Common myeloid progenitor, CD34-positive (primary cell): ENCODE measurements at regions of chr11 and their contacts with region 1.

Region 1: GRCh38 chr11:128905345-128906184 is 14.4 kb downstream of the KCNJ5 start:
- DNase-seq: peak; percentile 50 to 78 (median 59)
- H3K4me3 ChIP-seq: peak overlapping the region in 6 of 7 experiments; percentile 51 to 77 (median 61)
- H3K27ac ChIP-seq: no peak overlapping the region
- H3K4me1 ChIP-seq: peaks cover 12 to 63% (median 48%) of the 10 kb centered on the region in 4 experiments
- H3K27me3 ChIP-seq: peaks cover 0 to 9% (median 2%) of the 10 kb centered on the region in 5 experiments

Region 2: GRCh38 chr11:128733440-128734102 is 172.0 kb before region 1 on chr11:
- CTCF ChIA-PET with region 1: no interaction called
- POLR2A ChIA-PET with region 1: no interaction called
- DNase-seq: no peak
- H3K4me3 ChIP-seq: peak overlapping the region in 4 of 7 experiments; percentile 0 to 30 (median 16)
- H3K27ac ChIP-seq: no peak overlapping the region
- H3K4me1 ChIP-seq: peaks cover 68 to 98% (median 85%) of the 10 kb centered on the region in 4 experiments
- H3K27me3 ChIP-seq: no peaks in the 10 kb centered on the region

Region 3: DNA sequence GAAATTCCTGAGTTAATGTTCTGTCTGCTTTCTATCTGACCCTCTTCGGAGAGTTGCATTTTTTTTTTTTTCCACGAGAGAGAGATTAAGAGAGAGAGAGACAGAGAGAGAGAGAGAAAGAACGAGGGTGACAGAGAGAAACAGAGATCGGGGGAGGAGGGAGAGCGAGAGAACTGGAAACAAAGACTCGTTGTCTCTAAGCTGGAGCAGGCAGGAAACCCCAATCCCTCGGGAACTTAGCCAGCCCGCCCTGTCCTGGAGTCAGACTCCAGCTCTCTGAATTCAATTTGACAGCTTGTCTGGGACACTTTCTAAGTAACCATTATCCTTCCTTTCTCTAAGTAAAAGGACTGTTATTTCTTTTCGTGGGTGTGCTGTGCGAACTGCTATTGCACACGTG is 115.4 kb before region 1 on chr11:
- CTCF ChIA-PET with region 1: no interaction called
- POLR2A ChIA-PET with region 1: no interaction called
- DNase-seq: no peak
- H3K4me3 ChIP-seq: no peak overlapping the region
- H3K27ac ChIP-seq: no peak overlapping the region
- H3K4me1 ChIP-seq: no peaks in the 10 kb centered on the region
- H3K27me3 ChIP-seq: no peaks in the 10 kb centered on the region

Region 4: DNA sequence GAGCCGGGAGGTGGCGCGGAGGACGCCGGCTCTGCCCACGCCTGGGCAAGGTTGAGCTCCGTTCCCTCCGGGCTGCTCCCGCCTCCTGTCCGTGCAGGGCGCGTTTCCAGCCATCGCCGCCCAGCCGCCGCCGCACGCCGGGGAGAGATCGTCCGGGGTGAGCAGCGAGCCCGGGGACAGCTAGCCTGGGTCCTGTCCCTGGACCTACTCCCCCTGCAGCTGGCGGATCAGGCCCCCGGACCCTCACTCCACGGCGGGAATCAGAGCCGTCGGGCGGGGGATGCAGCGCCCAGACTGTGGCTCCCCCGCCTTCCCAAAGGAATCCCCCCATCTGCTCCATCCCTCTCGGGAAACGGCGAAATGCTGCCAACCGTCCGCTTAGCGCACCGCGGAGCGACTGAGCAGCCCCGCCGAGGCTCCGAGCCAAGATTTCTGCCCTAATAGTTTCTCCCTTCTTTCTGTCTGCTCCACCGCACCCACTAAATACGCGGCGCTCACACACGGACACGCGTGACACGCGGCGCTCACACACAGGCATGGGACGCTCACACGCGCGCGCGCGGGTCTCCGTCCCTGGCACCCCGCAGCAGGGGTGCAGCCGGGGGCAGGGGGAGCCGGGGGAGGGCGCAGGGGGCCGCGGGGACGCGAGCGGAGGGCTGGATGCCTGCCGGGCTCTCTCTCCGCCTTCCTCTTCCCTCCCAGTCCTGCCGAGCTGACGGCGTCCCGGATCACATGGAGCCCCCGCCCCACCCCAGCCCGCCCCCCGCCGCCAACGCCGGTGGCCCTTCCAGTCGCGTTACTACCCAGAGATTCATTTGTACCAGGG is 14.8 kb before region 1 on chr11 and contains the start of gene KCNJ5:
- CTCF ChIA-PET with region 1: interaction called, 153 read pairs
- POLR2A ChIA-PET with region 1: no interaction called
- DNase-seq: peak in 2 of 3 donors; percentile 51 to 68
- H3K4me3 ChIP-seq: peak within 1 kb of the TSS in 6 of 7 experiments; percentile 15 to 69 (median 53)
- H3K27ac ChIP-seq: no peak within 1 kb of the TSS
- H3K4me1 ChIP-seq: peaks cover 0 to 37% (median 21%) of the 10 kb centered on the region in 4 experiments
- H3K27me3 ChIP-seq: peaks cover 3 to 71% (median 45%) of the 10 kb centered on the region in 5 experiments

Region 5: GRCh38 chr11:128928400-128928799 is 22.8 kb after region 1 on chr11:
- CTCF ChIA-PET with region 1: interaction called, 19 read pairs
- POLR2A ChIA-PET with region 1: no interaction called
- DNase-seq: peak in 2 of 3 donors; percentile 48 to 51
- H3K4me3 ChIP-seq: peak overlapping the region in 1 of 7 experiments; percentile 11
- H3K27ac ChIP-seq: no peak overlapping the region
- H3K4me1 ChIP-seq: peaks cover 0 to 6% (median 0%) of the 10 kb centered on the region in 4 experiments
- H3K27me3 ChIP-seq: peaks cover 0 to 9% (median 0%) of the 10 kb centered on the region in 5 experiments

Region 6: GRCh38 chr11:128948589-128948988 is 43.0 kb after region 1 on chr11:
- CTCF ChIA-PET with region 1: interaction called, 63 read pairs
- POLR2A ChIA-PET with region 1: no interaction called
- DNase-seq: peak; percentile 48 to 62 (median 55)
- H3K4me3 ChIP-seq: no peak overlapping the region
- H3K27ac ChIP-seq: no peak overlapping the region
- H3K4me1 ChIP-seq: no peaks in the 10 kb centered on the region
- H3K27me3 ChIP-seq: peaks cover 0 to 4% (median 0%) of the 10 kb centered on the region in 5 experiments

Region 7: GRCh38 chr11:129066229-129066628 is 160.7 kb after region 1 on chr11:
- CTCF ChIA-PET with region 1: no interaction called
- POLR2A ChIA-PET with region 1: no interaction called
- DNase-seq: no peak
- H3K4me3 ChIP-seq: no peak overlapping the region
- H3K27ac ChIP-seq: no peak overlapping the region
- H3K4me1 ChIP-seq: no peaks in the 10 kb centered on the region
- H3K27me3 ChIP-seq: no peaks in the 10 kb centered on the region

Region 8: DNA sequence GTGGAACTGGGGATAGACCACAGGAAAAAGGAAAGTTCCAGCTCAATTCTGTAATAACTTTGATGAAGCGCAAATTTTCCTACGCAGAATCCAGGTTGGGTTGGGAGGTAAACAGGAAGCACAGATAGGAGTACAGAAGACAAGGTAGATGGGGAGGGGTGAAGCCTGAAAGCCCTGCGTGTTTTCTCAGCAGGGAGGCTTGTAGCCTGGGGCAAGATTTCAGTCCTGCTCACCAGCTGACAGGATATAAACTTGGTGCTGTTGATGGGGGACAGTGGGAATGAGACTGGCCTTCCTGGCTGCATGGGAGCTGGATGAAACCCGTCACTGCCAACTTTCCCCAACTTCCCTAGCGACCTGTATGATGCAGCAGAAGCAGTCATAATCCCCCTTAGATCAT is 171.6 kb after region 1 on chr11:
- CTCF ChIA-PET with region 1: no interaction called
- POLR2A ChIA-PET with region 1: no interaction called
- DNase-seq: no peak
- H3K4me3 ChIP-seq: no peak overlapping the region
- H3K27ac ChIP-seq: no peak overlapping the region
- H3K4me1 ChIP-seq: no peaks in the 10 kb centered on the region
- H3K27me3 ChIP-seq: no peaks in the 10 kb centered on the region